Caco-2 (cell line): ENCODE measurements at regions of chr14 and their contacts with region 1.

Region 1: GRCh38 chr14:46540986-46541385 is 110.6 kb downstream of the RPL10L start:
- DNase-seq: no peak
- H3K4me3 ChIP-seq: no peak overlapping the region
- H3K4me3 Mint-ChIP-seq: no peak overlapping the region
- H3K27ac Mint-ChIP-seq: no peak overlapping the region
- H3K4me1 ChIP-seq: peaks cover 5% of the 10 kb centered on the region; the same call in 1 of the 2 replicates
- H3K4me1 Mint-ChIP-seq: peaks cover 6% of the 10 kb centered on the region
- H3K27me3 ChIP-seq: no peaks in the 10 kb centered on the region
- H3K27me3 Mint-ChIP-seq: no peaks in the 10 kb centered on the region
- CTCF ChIP-seq: no peak

Region 2: GRCh38 chr14:46352844-46353243 is 188.1 kb before region 1 on chr14:
- CTCF ChIA-PET with region 1: no interaction called
- POLR2A ChIA-PET with region 1: no interaction called
- intact Hi-C with region 1: no loop called
- DNase-seq: no peak
- H3K4me3 ChIP-seq: no peak overlapping the region
- H3K4me3 Mint-ChIP-seq: no peak overlapping the region
- H3K27ac Mint-ChIP-seq: no peak overlapping the region
- H3K4me1 ChIP-seq: no peaks in the 10 kb centered on the region
- H3K4me1 Mint-ChIP-seq: no peaks in the 10 kb centered on the region
- H3K27me3 ChIP-seq: no peaks in the 10 kb centered on the region
- H3K27me3 Mint-ChIP-seq: peaks cover 2% of the 10 kb centered on the region
- CTCF ChIP-seq: no peak

Region 3: GRCh38 chr14:46499521-46499920 is 41.5 kb before region 1 on chr14:
- CTCF ChIA-PET with region 1: no interaction called
- POLR2A ChIA-PET with region 1: no interaction called
- intact Hi-C with region 1: loop called (anchors 2 kb)
- DNase-seq: no peak
- H3K4me3 ChIP-seq: no peak overlapping the region
- H3K4me3 Mint-ChIP-seq: no peak overlapping the region
- H3K27ac Mint-ChIP-seq: no peak overlapping the region
- H3K4me1 ChIP-seq: no peaks in the 10 kb centered on the region
- H3K4me1 Mint-ChIP-seq: no peaks in the 10 kb centered on the region
- H3K27me3 ChIP-seq: no peaks in the 10 kb centered on the region
- H3K27me3 Mint-ChIP-seq: no peaks in the 10 kb centered on the region
- CTCF ChIP-seq: no peak

Region 4: DNA sequence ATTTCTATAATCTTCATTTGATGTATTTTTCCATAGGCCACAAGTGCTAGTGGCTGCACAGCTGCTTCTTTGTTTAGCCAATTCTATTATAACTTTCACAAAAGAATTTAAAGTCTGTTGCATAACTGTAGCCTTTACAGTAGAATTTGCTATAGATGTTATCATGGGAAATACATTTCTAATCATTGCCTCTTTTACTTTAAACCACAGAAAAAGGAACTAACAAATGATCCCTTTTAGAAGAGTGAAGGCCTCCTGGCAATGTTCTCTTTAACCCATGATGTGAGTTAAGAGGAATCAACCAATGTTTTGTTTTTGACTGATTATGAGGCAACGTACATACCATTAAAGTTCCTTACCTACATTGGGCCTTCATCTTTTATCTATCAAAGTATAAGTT is 41.8 kb after region 1 on chr14:
- CTCF ChIA-PET with region 1: no interaction called
- POLR2A ChIA-PET with region 1: no interaction called
- intact Hi-C with region 1: no loop called
- DNase-seq: no peak
- H3K4me3 ChIP-seq: no peak overlapping the region
- H3K4me3 Mint-ChIP-seq: no peak overlapping the region
- H3K27ac Mint-ChIP-seq: no peak overlapping the region
- H3K4me1 ChIP-seq: peaks cover 7% of the 10 kb centered on the region; the same call in 1 of the 2 replicates
- H3K4me1 Mint-ChIP-seq: no peaks in the 10 kb centered on the region
- H3K27me3 ChIP-seq: no peaks in the 10 kb centered on the region
- H3K27me3 Mint-ChIP-seq: no peaks in the 10 kb centered on the region
- CTCF ChIP-seq: no peak

Region 5: DNA sequence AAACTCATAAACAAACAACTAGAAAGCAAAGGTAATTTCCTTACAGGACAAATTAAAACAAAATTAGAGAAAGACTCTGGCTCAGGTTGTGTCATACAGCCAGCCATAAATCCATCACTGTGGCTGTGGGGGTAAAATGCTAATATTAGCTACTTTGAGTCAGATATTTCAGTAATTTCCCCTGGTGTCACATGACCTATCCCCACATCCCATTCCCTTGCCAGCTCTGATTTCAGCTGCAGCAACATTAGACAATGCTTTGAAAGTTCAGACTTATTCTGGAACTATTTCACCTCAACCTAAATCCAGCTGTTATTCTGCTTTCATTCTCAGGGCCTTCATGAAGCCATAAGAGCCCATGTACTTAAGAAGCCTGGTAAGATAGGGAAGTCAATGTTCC is 55.2 kb after region 1 on chr14:
- CTCF ChIA-PET with region 1: no interaction called
- POLR2A ChIA-PET with region 1: no interaction called
- intact Hi-C with region 1: no loop called
- DNase-seq: no peak
- H3K4me3 ChIP-seq: no peak overlapping the region
- H3K4me3 Mint-ChIP-seq: no peak overlapping the region
- H3K27ac Mint-ChIP-seq: no peak overlapping the region
- H3K4me1 ChIP-seq: peaks cover 12% of the 10 kb centered on the region
- H3K4me1 Mint-ChIP-seq: peaks cover 9% of the 10 kb centered on the region
- H3K27me3 ChIP-seq: no peaks in the 10 kb centered on the region
- H3K27me3 Mint-ChIP-seq: peaks cover 3% of the 10 kb centered on the region
- CTCF ChIP-seq: no peak

Region 6: DNA sequence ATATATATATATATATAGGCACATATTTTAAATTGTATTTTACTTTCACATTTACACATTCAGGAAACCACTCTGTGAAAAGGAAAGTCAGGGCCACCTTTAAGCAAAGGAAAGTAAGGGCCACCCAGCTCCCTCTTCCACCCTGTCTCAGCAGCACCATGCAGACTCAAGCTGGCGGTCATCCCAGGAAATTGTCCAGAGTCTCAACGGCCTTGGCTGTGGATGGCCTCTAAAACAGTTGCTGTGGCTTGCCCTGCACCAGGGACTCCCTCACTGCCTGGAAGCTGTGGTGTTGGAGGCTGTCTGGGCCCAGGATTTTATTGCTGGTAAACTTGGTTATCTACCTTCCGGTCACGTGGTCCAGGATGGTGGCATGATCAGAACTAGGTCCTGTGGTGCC is 122.4 kb after region 1 on chr14:
- CTCF ChIA-PET with region 1: no interaction called
- POLR2A ChIA-PET with region 1: no interaction called
- intact Hi-C with region 1: no loop called
- DNase-seq: no peak
- H3K4me3 ChIP-seq: no peak overlapping the region
- H3K4me3 Mint-ChIP-seq: no peak overlapping the region
- H3K27ac Mint-ChIP-seq: no peak overlapping the region
- H3K4me1 ChIP-seq: no peaks in the 10 kb centered on the region
- H3K4me1 Mint-ChIP-seq: peaks cover 4% of the 10 kb centered on the region
- H3K27me3 ChIP-seq: no peaks in the 10 kb centered on the region
- H3K27me3 Mint-ChIP-seq: no peaks in the 10 kb centered on the region
- CTCF ChIP-seq: no peak